Caco-2 (cell line): ENCODE measurements at regions of chr1 and their contacts with region 1.

Region 1: DNA sequence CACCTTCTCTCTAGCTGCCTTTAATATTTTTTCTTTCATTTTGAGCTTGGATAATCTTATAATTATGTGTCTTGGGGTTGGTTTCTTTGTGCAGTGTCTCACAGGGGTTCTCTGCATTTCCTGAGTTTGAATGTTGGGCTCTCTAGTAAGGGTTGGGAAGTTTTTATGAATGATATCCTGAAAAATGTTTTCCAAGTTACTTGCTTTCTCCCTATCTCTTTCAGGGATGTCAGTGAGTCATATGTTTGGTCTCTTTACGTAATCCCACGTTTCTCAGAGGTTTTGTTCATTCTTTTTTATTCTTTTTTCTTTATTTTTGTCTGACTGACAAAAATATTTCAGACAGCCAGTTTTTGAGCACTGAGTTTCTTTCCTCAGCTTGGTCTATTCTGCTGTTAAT is 55.4 kb upstream of the CCDC190 start:
- DNase-seq: no peak
- H3K4me3 ChIP-seq: no peak overlapping the region
- H3K4me3 Mint-ChIP-seq: no peak overlapping the region
- H3K27ac Mint-ChIP-seq: no peak overlapping the region
- H3K4me1 ChIP-seq: peaks cover 10% of the 10 kb centered on the region
- H3K4me1 Mint-ChIP-seq: peaks cover 12% of the 10 kb centered on the region
- H3K27me3 ChIP-seq: no peaks in the 10 kb centered on the region
- H3K27me3 Mint-ChIP-seq: no peaks in the 10 kb centered on the region
- CTCF ChIP-seq: no peak

Region 2: DNA sequence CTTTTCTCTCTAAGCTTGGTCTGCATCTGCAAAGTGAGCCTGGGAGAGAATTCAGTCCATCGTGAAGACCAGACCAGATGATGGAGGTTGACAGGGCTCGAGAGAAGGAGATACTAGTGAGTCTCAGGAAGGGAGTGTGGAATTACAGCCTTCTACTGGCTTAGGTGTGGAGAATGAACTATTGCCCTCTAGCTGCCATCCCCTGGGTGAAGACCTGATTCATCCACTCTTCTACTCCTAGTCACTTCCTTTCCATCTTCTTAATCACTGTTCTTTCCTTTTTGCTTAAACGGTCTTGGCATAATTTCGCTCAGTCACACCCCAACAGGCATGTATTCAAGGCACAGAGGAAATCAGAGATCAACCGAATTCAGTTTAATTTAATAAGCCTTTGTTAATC is 159.9 kb before region 1 on chr1:
- CTCF ChIA-PET with region 1: no interaction called
- POLR2A ChIA-PET with region 1: no interaction called
- intact Hi-C with region 1: no loop called
- DNase-seq: no peak
- H3K4me3 ChIP-seq: no peak overlapping the region
- H3K4me3 Mint-ChIP-seq: no peak overlapping the region
- H3K27ac Mint-ChIP-seq: no peak overlapping the region
- H3K4me1 ChIP-seq: no peaks in the 10 kb centered on the region
- H3K4me1 Mint-ChIP-seq: no peaks in the 10 kb centered on the region
- H3K27me3 ChIP-seq: peaks cover 1% of the 10 kb centered on the region; the same call in 1 of the 2 replicates
- H3K27me3 Mint-ChIP-seq: peaks cover 3% of the 10 kb centered on the region
- CTCF ChIP-seq: peak in 1 of 2 experiments; percentile 9

Region 3: GRCh38 chr1:162892906-162893611 is 23.3 kb before region 1 on chr1:
- CTCF ChIA-PET with region 1: interaction called, 3 read pairs
- POLR2A ChIA-PET with region 1: no interaction called
- intact Hi-C with region 1: loop called (anchors 2 kb)
- DNase-seq: peak in 1 of 2 experiments; percentile 55
- H3K4me3 ChIP-seq: no peak overlapping the region
- H3K4me3 Mint-ChIP-seq: no peak overlapping the region
- H3K27ac Mint-ChIP-seq: peak overlapping the region; percentile 12
- H3K4me1 ChIP-seq: peaks cover 13% of the 10 kb centered on the region
- H3K4me1 Mint-ChIP-seq: peaks cover 12% of the 10 kb centered on the region
- H3K27me3 ChIP-seq: no peaks in the 10 kb centered on the region
- H3K27me3 Mint-ChIP-seq: no peaks in the 10 kb centered on the region
- CTCF ChIP-seq: no peak

Region 4: GRCh38 chr1:162930976-162931560 is 14.7 kb after region 1 on chr1:
- CTCF ChIA-PET with region 1: no interaction called
- POLR2A ChIA-PET with region 1: no interaction called
- intact Hi-C with region 1: loop called (anchors 2 kb)
- DNase-seq: no peak
- H3K4me3 ChIP-seq: no peak overlapping the region
- H3K4me3 Mint-ChIP-seq: no peak overlapping the region
- H3K27ac Mint-ChIP-seq: peak overlapping the region; percentile 23
- H3K4me1 ChIP-seq: peaks cover 22% of the 10 kb centered on the region
- H3K4me1 Mint-ChIP-seq: peaks cover 35% of the 10 kb centered on the region
- H3K27me3 ChIP-seq: no peaks in the 10 kb centered on the region
- H3K27me3 Mint-ChIP-seq: no peaks in the 10 kb centered on the region
- CTCF ChIP-seq: no peak

Region 5: DNA sequence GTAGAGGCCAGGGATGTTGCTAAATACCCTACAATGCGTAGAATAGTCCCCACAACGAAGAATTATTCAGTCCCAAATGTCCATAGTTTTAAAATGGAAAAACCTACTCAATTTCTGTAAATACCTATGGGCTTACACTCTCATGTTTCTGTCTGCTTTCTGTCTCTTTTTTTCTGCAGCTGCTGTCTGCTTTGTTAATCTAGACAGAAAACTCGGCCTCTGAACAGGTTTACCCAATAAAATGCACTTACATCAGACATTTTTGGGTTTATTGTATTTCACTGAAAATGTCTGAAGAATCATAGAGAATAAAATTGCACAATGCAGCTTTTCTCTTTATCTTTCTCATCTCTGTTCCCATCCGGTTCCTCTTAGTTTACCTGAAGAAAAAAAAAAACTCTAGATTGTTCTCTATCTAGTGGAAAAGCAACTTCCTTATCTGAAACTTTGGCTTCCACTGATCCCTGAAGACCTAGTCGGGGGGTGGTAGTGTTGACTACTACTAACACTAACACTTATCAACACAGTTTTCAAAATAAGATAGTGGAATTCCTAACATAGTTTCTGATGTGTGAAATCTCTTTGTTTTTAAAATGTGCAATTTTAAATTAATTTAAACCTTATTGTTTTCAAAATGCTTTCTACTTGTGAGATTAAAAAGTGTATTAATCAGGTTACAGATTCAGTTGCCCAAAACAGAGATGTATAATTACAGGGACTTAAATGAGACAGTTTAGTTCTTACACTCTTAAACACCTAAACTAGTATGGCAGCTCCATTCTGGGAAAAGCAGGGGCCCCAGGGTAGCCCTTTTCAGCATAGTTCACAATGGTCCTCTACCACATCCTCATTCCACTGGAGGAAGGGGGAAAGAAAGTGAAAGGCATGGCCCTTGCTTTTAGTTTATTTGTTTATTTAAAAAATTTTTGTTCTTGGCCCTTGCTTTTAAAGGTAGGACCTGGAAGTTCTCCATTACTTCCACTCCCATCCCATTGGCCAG is 21.6 kb after region 1 on chr1:
- CTCF ChIA-PET with region 1: no interaction called
- POLR2A ChIA-PET with region 1: no interaction called
- intact Hi-C with region 1: loop called (anchors 1 kb)
- DNase-seq: no peak
- H3K4me3 ChIP-seq: no peak overlapping the region
- H3K4me3 Mint-ChIP-seq: no peak overlapping the region
- H3K27ac Mint-ChIP-seq: no peak overlapping the region
- H3K4me1 ChIP-seq: peaks cover 24% of the 10 kb centered on the region
- H3K4me1 Mint-ChIP-seq: peaks cover 25% of the 10 kb centered on the region
- H3K27me3 ChIP-seq: no peaks in the 10 kb centered on the region
- H3K27me3 Mint-ChIP-seq: peaks cover 2% of the 10 kb centered on the region
- CTCF ChIP-seq: no peak

Region 6: DNA sequence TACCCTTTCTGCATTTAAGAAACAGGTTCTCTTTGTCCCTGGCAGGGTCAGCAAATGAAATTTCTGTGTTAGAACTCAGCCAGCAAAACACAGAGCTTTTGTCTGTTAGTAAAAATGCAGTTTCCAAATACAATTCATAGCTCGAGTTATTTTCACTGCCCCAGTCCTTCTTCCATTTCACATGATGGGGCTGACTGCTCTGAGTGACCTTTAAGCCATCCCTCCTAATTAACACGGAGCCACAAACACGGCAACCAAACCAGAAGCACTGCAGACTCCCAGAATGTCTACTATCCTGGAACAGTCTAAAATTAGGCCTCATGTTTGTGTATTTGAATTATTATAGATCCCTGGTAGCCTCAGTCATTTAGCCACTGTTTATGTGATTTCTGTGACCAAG is 53.6 kb after region 1 on chr1:
- CTCF ChIA-PET with region 1: no interaction called
- POLR2A ChIA-PET with region 1: no interaction called
- intact Hi-C with region 1: no loop called
- DNase-seq: no peak
- H3K4me3 ChIP-seq: no peak overlapping the region
- H3K4me3 Mint-ChIP-seq: no peak overlapping the region
- H3K27ac Mint-ChIP-seq: no peak overlapping the region
- H3K4me1 ChIP-seq: no peaks in the 10 kb centered on the region
- H3K4me1 Mint-ChIP-seq: no peaks in the 10 kb centered on the region
- H3K27me3 ChIP-seq: no peaks in the 10 kb centered on the region
- H3K27me3 Mint-ChIP-seq: no peaks in the 10 kb centered on the region
- CTCF ChIP-seq: no peak